Panc1 (cell line): ENCODE measurements at regions of chr5 and their contacts with region 1.

Region 1: DNA sequence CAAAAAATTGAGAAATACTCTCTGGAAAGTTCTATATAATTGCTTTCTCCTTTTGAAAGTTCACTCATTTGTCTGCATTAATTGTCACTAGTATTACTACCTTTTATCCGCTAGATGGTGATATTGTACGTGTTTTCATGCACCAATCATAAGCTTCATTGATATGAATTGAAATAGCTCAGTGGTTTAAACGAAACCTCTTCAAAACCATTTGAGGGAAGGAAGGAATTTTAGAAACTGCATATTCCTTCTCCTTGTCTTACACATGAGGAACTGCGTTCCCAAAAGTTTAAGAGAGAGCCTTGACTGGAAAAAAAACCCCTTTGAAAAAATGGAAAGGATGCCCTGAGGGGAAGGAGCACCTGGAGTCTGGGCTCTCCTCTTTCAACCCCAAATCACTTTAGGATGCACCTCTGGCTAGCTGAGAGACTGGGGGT is 98.6 kb downstream of the YTHDC2 start:
- DNase-seq: no peak
- ATAC-seq: peak; percentile 68; the same call in 1 of the 2 replicates
- H3K4me3 ChIP-seq: no peak overlapping the region
- H3K27ac ChIP-seq: no peak overlapping the region
- H3K4me1 ChIP-seq: no peaks in the 10 kb centered on the region
- H3K27me3 ChIP-seq: no peaks in the 10 kb centered on the region
- CTCF ChIP-seq: peak; percentile 64

Region 2: DNA sequence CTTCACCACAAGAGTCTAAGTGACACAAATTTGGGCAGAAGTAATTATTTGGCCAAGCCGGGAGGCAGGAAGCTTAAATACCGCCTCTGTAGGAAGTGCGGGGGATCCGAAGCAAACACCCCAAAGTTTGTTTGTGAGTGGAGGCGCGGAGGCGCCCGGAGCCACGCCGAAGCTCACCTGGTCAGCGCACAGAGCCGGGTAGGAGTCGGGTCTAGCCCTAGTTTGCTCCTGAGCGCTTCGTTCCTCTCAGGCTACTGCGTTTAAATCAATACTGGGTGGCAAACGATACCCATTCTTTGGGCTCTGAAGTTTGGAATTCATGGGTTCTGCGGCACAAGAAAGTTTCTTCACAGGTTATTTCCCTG is 124.7 kb before region 1 on chr5:
- CTCF ChIA-PET with region 1: no interaction called
- POLR2A ChIA-PET with region 1: no interaction called
- in situ Hi-C with region 1: no loop called
- intact Hi-C with region 1: no loop called
- DNase-seq: no peak
- ATAC-seq: peak; percentile 52
- H3K4me3 ChIP-seq: peak overlapping the region; percentile 52 to 62
- H3K27ac ChIP-seq: no peak overlapping the region
- H3K4me1 ChIP-seq: peaks cover 2% of the 10 kb centered on the region; the same call in 1 of the 2 replicates
- H3K27me3 ChIP-seq: peaks cover 42% of the 10 kb centered on the region
- CTCF ChIP-seq: no peak

Region 3: GRCh38 chr5:113531481-113532159 is 80.5 kb before region 1 on chr5:
- CTCF ChIA-PET with region 1: no interaction called
- POLR2A ChIA-PET with region 1: no interaction called
- in situ Hi-C with region 1: no loop called
- intact Hi-C with region 1: no loop called
- DNase-seq: no peak
- ATAC-seq: no peak
- H3K4me3 ChIP-seq: no peak overlapping the region
- H3K27ac ChIP-seq: no peak overlapping the region
- H3K4me1 ChIP-seq: no peaks in the 10 kb centered on the region
- H3K27me3 ChIP-seq: no peaks in the 10 kb centered on the region
- CTCF ChIP-seq: no peak

Region 4: DNA sequence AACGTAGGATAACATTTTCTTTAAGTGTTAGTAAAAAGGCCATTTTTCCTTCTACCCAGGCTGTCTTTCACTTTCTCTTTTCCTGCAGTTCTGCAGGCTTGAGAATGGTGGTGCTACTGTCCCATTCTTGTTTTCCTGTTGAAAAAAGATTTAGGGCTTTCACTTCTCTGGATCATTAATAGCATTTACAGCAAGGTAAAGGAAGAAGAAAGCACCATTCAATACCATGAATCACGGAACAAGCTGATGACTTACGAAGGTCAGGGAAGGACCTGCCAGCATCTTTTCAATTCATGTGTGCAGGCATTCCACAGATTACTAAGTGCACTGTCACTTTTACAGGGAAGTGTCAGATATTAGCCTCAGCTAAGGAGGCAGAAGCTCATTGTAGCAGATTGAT is 194.2 kb after region 1 on chr5:
- CTCF ChIA-PET with region 1: no interaction called
- POLR2A ChIA-PET with region 1: no interaction called
- in situ Hi-C with region 1: no loop called
- intact Hi-C with region 1: no loop called
- DNase-seq: no peak
- ATAC-seq: no peak
- H3K4me3 ChIP-seq: no peak overlapping the region
- H3K27ac ChIP-seq: no peak overlapping the region
- H3K4me1 ChIP-seq: no peaks in the 10 kb centered on the region
- H3K27me3 ChIP-seq: no peaks in the 10 kb centered on the region
- CTCF ChIP-seq: peak; percentile 32; the same call in 1 of the 2 replicates

Region 5: GRCh38 chr5:114252226-114252625 is 640.1 kb after region 1 on chr5:
- CTCF ChIA-PET with region 1: interaction called, 12 read pairs
- POLR2A ChIA-PET with region 1: no interaction called
- in situ Hi-C with region 1: no loop called
- intact Hi-C with region 1: no loop called
- DNase-seq: no peak
- ATAC-seq: no peak
- H3K4me3 ChIP-seq: no peak overlapping the region
- H3K27ac ChIP-seq: no peak overlapping the region
- H3K4me1 ChIP-seq: no peaks in the 10 kb centered on the region
- H3K27me3 ChIP-seq: no peaks in the 10 kb centered on the region
- CTCF ChIP-seq: no peak

Region 6: DNA sequence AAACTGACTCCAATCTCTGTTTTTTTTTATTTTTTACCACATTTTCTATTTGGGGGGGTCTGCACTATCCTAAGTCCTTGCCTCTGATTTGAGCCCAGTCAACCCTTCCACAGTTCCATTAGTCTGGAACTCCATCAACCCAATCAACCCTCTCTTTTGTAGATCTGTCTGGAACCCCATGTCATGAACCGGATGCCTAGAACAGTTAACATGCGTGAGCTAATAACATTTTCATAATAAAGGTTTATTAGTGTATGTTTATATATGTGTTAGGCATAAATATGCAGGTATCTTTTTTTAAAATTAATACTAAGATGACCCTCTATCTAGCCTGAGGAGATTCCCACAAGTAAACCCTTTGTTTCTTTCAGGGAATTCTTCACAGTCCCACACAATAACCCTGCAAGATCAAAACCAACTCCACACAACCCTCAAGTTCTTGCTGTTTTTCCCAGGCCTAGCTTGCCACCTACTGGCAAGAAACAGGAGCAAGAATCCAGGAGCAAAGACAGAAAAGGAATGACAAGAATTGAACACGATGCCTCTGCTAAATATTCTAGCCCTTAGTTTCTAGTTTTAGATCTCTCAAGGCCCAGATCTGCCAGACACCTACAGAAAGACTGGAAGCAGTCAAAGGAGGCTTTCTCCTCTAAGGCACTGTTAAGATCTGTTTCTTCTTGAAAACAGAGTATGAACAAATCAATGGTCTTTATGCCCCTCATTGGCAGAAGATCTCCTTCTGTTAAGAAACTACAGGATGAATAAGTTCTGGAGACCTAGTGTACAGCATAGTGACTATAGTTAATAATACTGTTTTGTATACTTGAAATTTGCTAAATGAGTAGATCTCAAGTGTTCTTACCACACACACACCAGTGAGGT is 1457.2 kb after region 1 on chr5:
- CTCF ChIA-PET with region 1: interaction called, 4 read pairs
- POLR2A ChIA-PET with region 1: no interaction called
- in situ Hi-C with region 1: no loop called
- intact Hi-C with region 1: loop called (anchors 10 kb)
- DNase-seq: no peak
- ATAC-seq: peak; percentile 83
- H3K4me3 ChIP-seq: no peak overlapping the region
- H3K27ac ChIP-seq: no peak overlapping the region
- H3K4me1 ChIP-seq: no peaks in the 10 kb centered on the region
- H3K27me3 ChIP-seq: no peaks in the 10 kb centered on the region
- CTCF ChIP-seq: peak; percentile 76